Right lobe of liver (tissue), 6 donors: ENCODE measurements at regions of chr2 and their contacts with region 1.

Region 1: DNA sequence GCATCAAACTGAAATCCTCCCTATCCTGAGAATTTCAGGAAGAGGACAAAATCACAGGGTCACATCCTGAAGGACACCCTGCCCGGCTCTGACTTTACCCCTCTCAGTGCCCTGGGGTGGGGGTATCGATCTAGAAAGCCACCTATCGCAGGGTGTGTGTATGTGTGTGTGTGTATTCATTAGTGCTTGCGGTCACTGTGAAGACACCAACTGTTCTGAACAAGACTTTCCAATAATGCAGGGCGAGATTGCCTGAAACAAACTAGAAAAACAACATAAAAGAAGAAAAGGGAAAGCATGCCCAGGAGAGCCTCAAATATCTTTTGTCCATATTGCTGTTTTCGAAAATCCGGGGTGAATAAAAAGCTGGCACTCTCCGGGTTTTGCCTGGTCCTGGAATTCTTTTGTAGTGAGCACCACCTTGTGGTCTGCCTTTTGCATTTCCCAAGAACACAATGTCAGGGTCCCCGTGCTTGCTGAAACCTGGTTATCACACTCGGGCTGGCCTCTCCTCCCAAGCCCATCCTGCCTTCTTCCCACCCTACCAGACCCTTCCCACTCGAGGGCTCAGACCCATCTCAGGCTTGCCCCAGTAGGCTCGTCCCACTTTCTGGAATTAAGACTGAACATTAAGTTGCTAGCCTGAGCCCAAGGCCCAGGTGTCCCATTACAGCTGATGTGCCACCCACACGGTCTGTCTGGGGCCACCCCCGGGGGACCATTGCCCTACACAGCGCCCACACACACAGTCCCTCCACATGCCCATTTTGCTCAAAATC is 25.0 kb upstream of the COPS8 start:
- DNase-seq: no peak
- ATAC-seq: peak; percentile 82 to 92 (median 88)
- H3K4me3 ChIP-seq: no peak overlapping the region
- H3K27ac ChIP-seq: no peak overlapping the region
- H3K4me1 ChIP-seq: peaks cover 0 to 6% (median 0%) of the 10 kb centered on the region in 4 donors
- H3K27me3 ChIP-seq: no peaks in the 10 kb centered on the region
- CTCF ChIP-seq: peak; percentile 58 to 75 (median 68)
- POLR2A ChIP-seq: no peak

Region 2: DNA sequence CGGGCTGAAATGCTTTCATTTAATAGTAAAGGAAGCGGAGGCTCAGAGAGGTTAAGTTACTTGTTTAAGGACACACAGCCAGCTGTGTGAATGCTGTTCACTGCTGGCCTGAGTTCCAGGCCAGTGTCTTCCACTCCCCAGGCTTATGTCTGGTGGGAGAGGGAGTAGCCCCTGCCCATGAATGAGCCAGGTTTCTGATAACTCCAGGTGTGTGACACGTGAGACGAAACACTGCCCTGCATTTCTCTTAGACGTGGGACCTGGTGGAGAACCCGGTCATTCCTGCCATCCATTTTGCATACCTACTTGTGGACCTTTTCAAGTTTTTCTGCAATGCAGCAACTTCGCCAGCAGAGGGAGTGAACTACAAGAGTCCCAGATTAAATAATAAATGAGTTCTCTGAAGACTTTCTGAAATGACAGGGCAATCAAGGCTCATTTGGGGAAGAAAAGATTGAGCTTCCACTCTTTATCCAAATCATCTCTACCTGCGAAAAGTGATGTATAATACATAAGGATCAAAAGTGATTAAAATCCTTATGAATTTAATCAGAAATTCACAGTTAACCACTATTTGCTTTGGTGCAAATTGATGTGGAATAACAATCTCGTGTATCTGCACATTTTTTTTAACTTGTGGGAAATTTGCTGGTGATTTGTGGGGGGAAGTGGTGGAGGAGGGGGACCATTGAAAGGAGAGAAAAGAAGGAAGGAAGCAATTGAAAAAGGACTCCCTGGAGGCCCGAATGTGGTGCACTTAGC is 717.1 kb before region 1 on chr2:
- intact Hi-C with region 1: loop called in 1 of 2 experiments (anchors 5 kb)
- DNase-seq: no peak
- ATAC-seq: peak; percentile 56 to 77 (median 66)
- H3K4me3 ChIP-seq: no peak overlapping the region
- H3K27ac ChIP-seq: no peak overlapping the region
- H3K4me1 ChIP-seq: no peaks in the 10 kb centered on the region
- H3K27me3 ChIP-seq: no peaks in the 10 kb centered on the region
- CTCF ChIP-seq: peak; percentile 69 to 77 (median 72)
- POLR2A ChIP-seq: no peak

Region 3: GRCh38 chr2:236352761-236353593 is 707.7 kb before region 1 on chr2:
- intact Hi-C with region 1: loop called (anchors 5 kb)
- DNase-seq: no peak
- ATAC-seq: peak; percentile 55 to 73 (median 66)
- H3K4me3 ChIP-seq: no peak overlapping the region
- H3K27ac ChIP-seq: no peak overlapping the region
- H3K4me1 ChIP-seq: no peaks in the 10 kb centered on the region
- H3K27me3 ChIP-seq: no peaks in the 10 kb centered on the region
- CTCF ChIP-seq: peak; percentile 74 to 93 (median 84)
- POLR2A ChIP-seq: no peak